ENCODE measurements at regions of chr10 and their contacts with region 1.

Region 1: GRCh38 chr10:29689001-29689400 is 54.2 kb upstream of the SVIL start:
- DNase-seq: no peak
- H3K4me3 Mint-ChIP-seq: no peak overlapping the region
- H3K27ac Mint-ChIP-seq: no peak overlapping the region
- H3K4me1 Mint-ChIP-seq: peaks cover 52% of the 10 kb centered on the region
- H3K27me3 Mint-ChIP-seq: no peaks in the 10 kb centered on the region
- CTCF ChIP-seq: no peak

Region 2: GRCh38 chr10:29702273-29703164 is 13.5 kb after region 1 on chr10:
- CTCF ChIA-PET with region 1: interaction called, 11 read pairs
- intact Hi-C with region 1: no loop called
- DNase-seq: no peak
- H3K4me3 Mint-ChIP-seq: no peak overlapping the region
- H3K27ac Mint-ChIP-seq: peak overlapping the region; percentile 52
- H3K4me1 Mint-ChIP-seq: peaks cover 25% of the 10 kb centered on the region
- H3K27me3 Mint-ChIP-seq: no peaks in the 10 kb centered on the region
- CTCF ChIP-seq: no peak

Region 3: GRCh38 chr10:29713450-29713849 is 24.4 kb after region 1 on chr10:
- CTCF ChIA-PET with region 1: no interaction called
- intact Hi-C with region 1: no loop called
- DNase-seq: no peak
- H3K4me3 Mint-ChIP-seq: no peak overlapping the region
- H3K27ac Mint-ChIP-seq: no peak overlapping the region
- H3K4me1 Mint-ChIP-seq: peaks cover 39% of the 10 kb centered on the region
- H3K27me3 Mint-ChIP-seq: no peaks in the 10 kb centered on the region
- CTCF ChIP-seq: no peak

Region 4: DNA sequence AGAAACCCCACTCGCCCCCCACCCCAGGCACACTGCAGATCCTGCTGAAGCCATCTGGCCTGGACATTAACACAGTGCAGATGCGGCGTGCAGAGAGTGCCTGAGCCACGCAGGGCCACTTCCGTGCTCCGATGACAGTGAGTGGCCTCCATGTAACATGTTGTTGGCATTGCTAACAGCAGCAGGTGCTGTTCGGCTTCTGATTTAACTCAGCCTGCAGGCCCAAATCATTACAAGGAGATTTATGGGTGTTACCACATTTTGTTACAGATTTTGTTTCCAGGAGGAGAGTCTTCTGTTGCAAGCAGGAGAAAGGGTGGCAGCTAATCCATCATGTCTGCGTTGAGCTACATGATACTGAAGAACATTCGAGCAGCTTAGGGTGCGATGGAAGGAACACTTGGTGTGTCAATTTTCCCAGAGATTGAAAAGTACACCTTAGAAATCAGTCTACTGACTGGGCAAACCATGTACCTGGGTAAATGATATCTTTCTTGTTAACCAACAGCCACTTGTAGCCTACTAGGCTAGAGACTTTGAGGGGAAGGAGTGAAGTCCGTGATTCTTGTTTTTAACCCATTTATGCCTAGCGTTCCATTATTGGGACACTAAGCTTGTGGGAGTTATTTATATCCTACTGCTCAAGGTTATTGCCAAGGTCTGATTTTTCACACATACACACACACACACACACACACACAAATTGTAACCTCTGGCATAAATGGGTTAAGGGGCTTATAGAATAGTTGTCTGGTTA is 280.4 kb after region 1 on chr10:
- CTCF ChIA-PET with region 1: no interaction called
- intact Hi-C with region 1: no loop called
- DNase-seq: no peak
- H3K4me3 Mint-ChIP-seq: no peak overlapping the region
- H3K27ac Mint-ChIP-seq: no peak overlapping the region
- H3K4me1 Mint-ChIP-seq: peaks cover 7% of the 10 kb centered on the region
- H3K27me3 Mint-ChIP-seq: no peaks in the 10 kb centered on the region
- CTCF ChIP-seq: no peak